Ascending aorta (tissue), 2 donors: ENCODE measurements at regions of chr6 and their contacts with region 1.

Region 1: DNA sequence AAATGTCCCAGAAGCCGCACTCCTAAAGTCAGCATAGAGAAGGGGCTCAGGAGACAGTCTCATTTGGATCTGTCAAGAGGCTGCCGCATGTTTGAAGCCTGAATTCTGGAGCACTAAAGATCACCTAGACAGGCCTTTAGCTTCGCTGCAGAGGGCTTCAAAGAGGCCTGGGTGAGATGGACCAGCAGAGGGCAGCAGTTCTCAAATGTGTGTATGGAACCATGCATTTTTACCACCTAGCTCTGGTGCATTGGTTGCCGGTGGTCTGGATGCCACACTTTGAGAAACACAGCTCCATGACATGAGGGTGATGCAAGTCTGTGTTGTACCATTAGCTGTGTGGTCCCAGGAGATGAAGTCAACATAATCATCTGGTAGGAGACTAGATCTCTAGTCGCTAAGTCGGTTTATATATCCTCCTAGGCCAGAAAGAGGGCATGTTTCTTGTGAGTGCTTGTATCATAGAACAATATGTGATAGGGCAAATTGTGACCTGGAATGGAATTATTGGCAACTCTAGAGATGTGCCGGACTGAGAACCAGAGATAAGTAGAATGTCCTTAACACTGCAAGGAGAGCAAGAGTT is 64.8 kb downstream of the KIAA0319 start:
- DNase-seq: peak in 1 of 2 donors; percentile 83
- H3K4me3 ChIP-seq: no peak overlapping the region
- H3K27ac ChIP-seq: no peak overlapping the region
- H3K4me1 ChIP-seq: no peaks in the 10 kb centered on the region
- H3K27me3 ChIP-seq: no peaks in the 10 kb centered on the region
- CTCF ChIP-seq: peak; percentile 29 to 74 (median 72)

Region 2: DNA sequence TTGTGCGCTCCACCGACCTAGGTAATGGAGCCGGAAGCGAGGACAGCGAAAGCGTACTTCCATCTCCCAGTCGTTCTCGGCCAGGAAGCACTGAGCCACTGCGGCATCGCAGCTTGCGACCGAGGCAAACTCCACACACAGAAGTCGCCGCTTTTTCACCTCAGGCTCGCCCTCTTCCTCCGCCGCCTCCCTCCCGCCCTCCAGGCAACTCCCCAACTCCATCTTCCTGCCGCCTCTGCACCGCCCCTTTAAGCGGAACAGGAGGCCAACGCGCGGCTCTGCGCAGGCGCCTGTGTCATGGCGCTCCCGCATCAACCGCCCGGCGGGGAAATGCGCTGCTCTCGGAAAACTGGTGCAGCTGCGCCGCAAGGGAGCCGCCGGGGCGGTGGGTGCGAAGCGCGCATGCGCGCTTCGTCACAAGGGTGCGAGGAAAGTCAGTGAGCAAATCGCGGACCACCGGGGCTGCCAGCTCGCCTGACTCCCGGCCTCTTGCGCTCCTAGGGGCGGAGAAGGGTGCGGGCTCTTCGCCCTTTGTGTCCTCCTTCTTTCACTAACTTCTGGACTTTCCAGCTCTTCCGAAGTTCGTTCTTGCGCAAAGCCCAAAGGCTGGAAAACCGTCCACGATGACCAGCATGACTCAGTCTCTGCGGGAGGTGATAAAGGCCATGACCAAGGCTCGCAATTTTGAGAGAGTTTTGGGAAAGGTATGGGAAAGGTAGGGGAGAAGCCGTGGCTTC is 85.6 kb after region 1 on chr6 and contains the starts of genes ACOT13 and TDP2:
- intact Hi-C with region 1: loop called (anchors 1 kb)
- DNase-seq: peak; percentile 86 to 98
- H3K4me3 ChIP-seq: peak within 1 kb of the TSS; percentile 85 to 99
- H3K27ac ChIP-seq: peak within 1 kb of the TSS; percentile 90 to 95
- H3K4me1 ChIP-seq: peaks cover 4 to 13% of the 10 kb centered on the region in 2 donors
- H3K27me3 ChIP-seq: no peaks in the 10 kb centered on the region
- CTCF ChIP-seq: peak; percentile 50 to 74 (median 52)
- total RNA-seq, gene ACOT13: 3.1 TPM
- total RNA-seq, gene TDP2: 5.6 TPM

Region 3: DNA sequence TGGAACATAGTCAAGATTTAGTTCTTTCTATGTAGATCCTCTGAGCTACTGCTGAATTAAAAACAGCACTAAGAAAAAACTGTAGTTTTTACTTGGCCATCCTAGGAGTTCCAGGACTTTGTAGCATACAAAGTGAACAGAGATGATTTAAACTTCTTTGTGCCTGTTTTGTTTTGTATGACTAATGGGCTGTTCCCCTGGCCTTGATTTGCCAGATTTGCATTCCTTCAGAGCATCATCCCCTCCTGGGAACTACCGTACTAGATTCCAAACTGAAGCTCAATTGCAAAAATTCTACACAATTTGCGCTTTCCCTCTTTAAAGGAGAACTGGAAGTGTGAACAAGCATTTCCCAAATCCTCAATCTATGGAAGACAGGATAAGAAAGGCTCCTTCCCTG is 108.8 kb after region 1 on chr6:
- intact Hi-C with region 1: loop called (anchors 1 kb)
- DNase-seq: no peak
- H3K4me3 ChIP-seq: no peak overlapping the region
- H3K27ac ChIP-seq: no peak overlapping the region
- H3K4me1 ChIP-seq: no peaks in the 10 kb centered on the region
- H3K27me3 ChIP-seq: no peaks in the 10 kb centered on the region
- CTCF ChIP-seq: no peak

Region 4: DNA sequence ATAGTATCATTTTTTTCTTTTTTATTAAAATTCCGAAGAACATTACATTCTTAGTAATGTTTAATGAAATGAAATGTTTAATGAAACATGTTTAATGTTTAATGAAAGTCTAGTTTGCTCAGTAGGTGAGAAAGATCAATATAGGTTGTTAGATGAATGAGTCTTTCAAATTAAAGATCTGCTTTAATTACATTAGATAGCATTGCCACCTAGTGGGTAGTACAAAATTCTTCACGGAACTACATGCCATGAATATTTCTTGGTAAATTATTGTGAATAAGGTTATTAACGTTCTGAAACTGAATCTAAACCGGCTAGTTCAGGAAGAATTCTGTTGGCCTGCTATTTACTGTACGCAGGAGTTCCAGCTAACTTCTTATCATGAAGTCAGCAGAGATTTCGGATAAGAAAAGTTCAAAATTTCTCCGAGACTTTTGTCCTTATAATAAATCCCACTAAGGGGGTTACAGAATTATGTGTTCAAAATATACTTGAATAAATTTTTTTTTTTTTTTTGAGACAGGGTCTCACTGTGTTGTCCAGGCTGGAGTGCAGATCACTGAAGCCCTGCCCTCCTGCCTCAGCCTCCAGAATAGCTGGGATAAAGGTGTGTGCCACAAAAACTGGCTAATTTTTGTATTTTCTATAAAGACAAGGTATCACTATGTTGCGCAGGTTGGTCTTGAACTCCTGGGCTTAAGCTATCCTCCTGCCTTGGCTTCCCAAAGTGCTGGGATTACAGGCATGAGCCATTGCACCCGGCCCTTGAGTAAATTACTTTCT is 185.7 kb after region 1 on chr6:
- intact Hi-C with region 1: loop called (anchors 1 kb)
- DNase-seq: no peak
- H3K4me3 ChIP-seq: no peak overlapping the region
- H3K27ac ChIP-seq: no peak overlapping the region
- H3K4me1 ChIP-seq: no peaks in the 10 kb centered on the region
- H3K27me3 ChIP-seq: no peaks in the 10 kb centered on the region
- CTCF ChIP-seq: peak in 2 of 3 experiments; percentile 10 to 45

Region 5: DNA sequence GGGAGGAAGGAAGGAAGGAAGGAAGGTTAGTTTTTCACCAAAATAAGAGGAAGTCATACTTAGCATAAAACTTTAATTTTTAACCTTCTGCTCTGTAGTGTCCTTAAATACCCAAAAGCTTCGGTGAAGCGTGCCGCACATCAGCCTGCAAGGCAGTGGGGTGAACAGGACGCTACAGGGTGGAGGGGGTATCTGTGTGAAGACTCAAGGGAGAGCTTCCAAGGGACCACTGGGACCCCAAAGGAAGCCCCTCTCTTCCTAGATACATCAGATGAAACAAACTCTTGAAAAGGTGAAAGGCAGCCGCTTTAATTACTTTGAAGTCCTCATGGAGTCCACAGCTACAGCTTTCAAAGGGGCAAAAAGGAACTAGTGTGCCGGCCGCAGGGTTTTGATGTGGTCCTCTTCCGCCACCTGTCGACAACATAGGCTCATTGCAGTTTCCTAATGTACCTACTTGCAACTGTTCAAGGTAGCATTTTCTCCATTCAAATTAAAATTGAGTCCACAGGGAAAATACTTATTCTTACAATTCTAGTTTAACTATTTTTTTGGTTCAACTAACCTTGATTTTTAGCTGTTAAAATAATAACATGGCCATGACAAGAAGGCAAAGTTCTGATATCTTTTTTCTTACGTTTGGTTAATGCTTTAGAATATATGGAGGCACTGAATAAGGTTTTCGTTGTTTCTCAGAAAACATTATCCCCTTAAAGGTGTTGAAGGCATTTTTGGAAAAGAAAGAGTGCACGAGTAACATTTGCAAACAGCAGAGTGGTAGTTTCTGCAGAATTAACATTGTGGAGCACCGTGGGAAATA is 489.6 kb after region 1 on chr6:
- intact Hi-C with region 1: loop called (anchors 2 kb)
- DNase-seq: peak in 1 of 2 donors; percentile 91
- H3K4me3 ChIP-seq: no peak overlapping the region
- H3K27ac ChIP-seq: no peak overlapping the region
- H3K4me1 ChIP-seq: no peaks in the 10 kb centered on the region
- H3K27me3 ChIP-seq: no peaks in the 10 kb centered on the region
- CTCF ChIP-seq: peak; percentile 71 to 91 (median 85)